ENCODE measurements at regions of chr16 and their contacts with region 1.

Region 1: GRCh38 chr16:22190776-22191531 is 15.1 kb upstream of the EEF2K start:
- DNase-seq: peak; percentile 83
- H3K4me3 ChIP-seq: peak overlapping the region; percentile 58 to 62
- H3K27ac ChIP-seq: peak overlapping the region; percentile 85
- H3K4me1 ChIP-seq: peaks cover 3 to 26% of the 10 kb centered on the region in 2 experiments; a peak in 2 of 4 replicates
- H3K27me3 ChIP-seq: no peaks in the 10 kb centered on the region
- CTCF ChIP-seq: no peak
- EP300 ChIP-seq: no peak
- RAD21 ChIP-seq: no peak

Region 2: GRCh38 chr16:21989133-21989532 is 201.8 kb before region 1 on chr16:
- CTCF ChIA-PET with region 1: interaction called, 17 read pairs
- POLR2A ChIA-PET with region 1: no interaction called
- DNase-seq: no peak
- H3K4me3 ChIP-seq: no peak overlapping the region
- H3K27ac ChIP-seq: no peak overlapping the region
- H3K4me1 ChIP-seq: peaks cover 0 to 4% of the 10 kb centered on the region in 2 experiments; a peak in 1 of 4 replicates
- H3K27me3 ChIP-seq: no peaks in the 10 kb centered on the region
- CTCF ChIP-seq: no peak
- EP300 ChIP-seq: no peak
- RAD21 ChIP-seq: no peak

Region 3: DNA sequence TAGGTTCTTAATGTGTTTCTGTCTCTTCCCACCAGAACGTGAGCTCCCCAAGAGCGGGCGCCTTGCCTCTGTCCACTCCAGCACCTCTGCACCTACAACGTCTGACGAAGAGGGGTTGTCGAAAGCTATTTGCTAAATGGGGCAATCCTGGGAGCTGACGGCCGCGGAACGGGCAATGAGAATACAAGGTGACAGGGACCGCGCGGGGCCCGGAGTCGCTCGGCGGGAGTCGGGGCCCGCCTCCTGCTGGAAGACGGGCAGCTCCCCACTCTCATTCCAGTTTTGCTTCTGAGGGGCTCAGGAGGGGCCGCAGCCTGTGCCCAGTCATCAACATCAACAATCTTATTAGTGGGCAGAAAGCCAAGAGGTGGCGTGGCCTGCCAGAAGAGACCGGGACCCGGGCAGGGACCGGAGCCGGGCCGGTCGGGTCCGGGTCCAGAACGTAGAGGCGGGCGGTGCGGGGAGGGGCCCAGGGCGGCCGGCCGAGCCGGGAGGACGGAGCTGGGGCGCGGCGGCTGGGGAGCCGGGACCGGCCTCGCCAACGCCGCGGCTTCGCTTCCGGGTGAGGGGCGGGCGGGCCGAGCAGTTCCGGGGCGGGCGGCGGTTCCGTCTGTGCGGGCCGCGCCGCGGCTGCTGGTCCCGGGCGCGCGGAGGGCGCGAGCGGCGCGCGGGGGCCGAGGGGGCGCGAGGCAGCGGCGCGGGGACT is 183.3 kb before region 1 on chr16 and contains the start of gene MOSMO:
- CTCF ChIA-PET with region 1: interaction called, 74 read pairs
- POLR2A ChIA-PET with region 1: interaction called, 4 read pairs
- DNase-seq: peak; percentile 94
- H3K4me3 ChIP-seq: peak within 1 kb of the TSS; percentile 96 to 98
- H3K27ac ChIP-seq: peak within 1 kb of the TSS; percentile 62 to 90; a peak in 3 of 4 replicates
- H3K4me1 ChIP-seq: peaks cover 0 to 13% of the 10 kb centered on the region in 2 experiments; a peak in 1 of 4 replicates
- H3K27me3 ChIP-seq: no peaks in the 10 kb centered on the region
- CTCF ChIP-seq: no peak
- EP300 ChIP-seq: no peak
- RAD21 ChIP-seq: no peak
- polyA plus RNA-seq, gene MOSMO: 8.0 and 10.0 TPM in 2 replicates

Region 4: DNA sequence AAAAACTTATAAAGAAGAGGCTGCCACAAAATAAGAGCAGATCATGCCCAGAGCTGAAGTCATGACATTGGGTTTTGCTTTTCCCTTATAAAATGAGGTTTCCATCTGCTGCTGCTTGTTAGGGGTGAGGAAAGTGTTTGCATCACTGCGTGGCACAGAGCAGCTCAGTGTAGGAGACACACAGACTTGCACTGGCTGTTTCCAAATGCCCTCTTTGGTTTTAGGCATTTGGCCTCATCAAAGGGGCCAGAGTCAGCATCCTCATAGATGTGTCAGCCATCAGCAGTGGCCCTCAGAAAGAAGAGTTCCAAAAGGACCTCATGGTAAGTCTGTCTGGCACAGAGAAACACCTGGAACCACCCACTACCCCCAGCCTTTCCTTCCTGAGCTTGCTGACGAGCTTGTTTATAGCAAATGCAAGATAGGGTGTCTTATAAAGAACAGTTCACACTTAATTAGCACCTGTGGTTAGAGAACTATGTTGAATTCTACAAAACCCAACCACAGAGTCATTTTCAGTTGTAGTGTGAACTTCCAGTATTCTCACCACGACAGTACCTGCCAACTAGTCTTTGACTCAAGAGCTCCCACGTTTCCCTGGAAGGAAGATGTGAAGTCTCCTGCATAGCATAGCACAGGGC is 81.6 kb before region 1 on chr16:
- CTCF ChIA-PET with region 1: interaction called, 10 read pairs
- POLR2A ChIA-PET with region 1: no interaction called
- DNase-seq: no peak
- H3K4me3 ChIP-seq: no peak overlapping the region
- H3K27ac ChIP-seq: no peak overlapping the region
- H3K4me1 ChIP-seq: no peaks in the 10 kb centered on the region
- H3K27me3 ChIP-seq: peaks cover 9% of the 10 kb centered on the region
- CTCF ChIP-seq: no peak
- EP300 ChIP-seq: no peak
- RAD21 ChIP-seq: no peak

Region 5: GRCh38 chr16:22206013-22206841 is 15.3 kb after region 1 on chr16 and contains the start of gene EEF2K:
- CTCF ChIA-PET with region 1: interaction called, 36 read pairs
- POLR2A ChIA-PET with region 1: no interaction called
- DNase-seq: peak; percentile 96
- H3K4me3 ChIP-seq: peak within 1 kb of the TSS; percentile 64 to 87
- H3K27ac ChIP-seq: peak within 1 kb of the TSS; percentile 69 to 82
- H3K4me1 ChIP-seq: peaks cover 6 to 7% of the 10 kb centered on the region in 2 experiments; a peak in 1 of 4 replicates
- H3K27me3 ChIP-seq: no peaks in the 10 kb centered on the region
- CTCF ChIP-seq: peak; percentile 63
- EP300 ChIP-seq: no peak; a peak in 2 of 4 replicates
- RAD21 ChIP-seq: peak; percentile 67
- polyA plus RNA-seq, gene EEF2K: 8.0 and 10.4 TPM in 2 replicates